ENCODE measurements at regions of chr10 and their contacts with region 1.

Region 1: GRCh38 chr10:1009071-1009494 is 16.6 kb downstream of the IDI2 start:
- DNase-seq: no peak
- ATAC-seq: no peak
- H3K4me3 Mint-ChIP-seq: no peak overlapping the region
- H3K27ac Mint-ChIP-seq: peak overlapping the region; percentile 83
- H3K4me1 Mint-ChIP-seq: peaks cover 14% of the 10 kb centered on the region
- H3K27me3 Mint-ChIP-seq: no peaks in the 10 kb centered on the region
- CTCF ChIP-seq: no peak

Region 2: GRCh38 chr10:997266-998022 is 11.6 kb before region 1 on chr10:
- CTCF ChIA-PET with region 1: no interaction called
- POLR2A ChIA-PET with region 1: interaction called, 18 read pairs
- intact Hi-C with region 1: no loop called
- DNase-seq: no peak
- ATAC-seq: no peak
- H3K4me3 Mint-ChIP-seq: no peak overlapping the region
- H3K27ac Mint-ChIP-seq: no peak overlapping the region
- H3K4me1 Mint-ChIP-seq: peaks cover 22% of the 10 kb centered on the region
- H3K27me3 Mint-ChIP-seq: no peaks in the 10 kb centered on the region
- CTCF ChIP-seq: no peak

Measured in activated CD8-positive, alpha-beta T cell treated with anti-CD3 and anti-CD28 coated beads for 36 hours (primary cell).